ENCODE measurements at regions of chr10 and their contacts with region 1.

Region 1: DNA sequence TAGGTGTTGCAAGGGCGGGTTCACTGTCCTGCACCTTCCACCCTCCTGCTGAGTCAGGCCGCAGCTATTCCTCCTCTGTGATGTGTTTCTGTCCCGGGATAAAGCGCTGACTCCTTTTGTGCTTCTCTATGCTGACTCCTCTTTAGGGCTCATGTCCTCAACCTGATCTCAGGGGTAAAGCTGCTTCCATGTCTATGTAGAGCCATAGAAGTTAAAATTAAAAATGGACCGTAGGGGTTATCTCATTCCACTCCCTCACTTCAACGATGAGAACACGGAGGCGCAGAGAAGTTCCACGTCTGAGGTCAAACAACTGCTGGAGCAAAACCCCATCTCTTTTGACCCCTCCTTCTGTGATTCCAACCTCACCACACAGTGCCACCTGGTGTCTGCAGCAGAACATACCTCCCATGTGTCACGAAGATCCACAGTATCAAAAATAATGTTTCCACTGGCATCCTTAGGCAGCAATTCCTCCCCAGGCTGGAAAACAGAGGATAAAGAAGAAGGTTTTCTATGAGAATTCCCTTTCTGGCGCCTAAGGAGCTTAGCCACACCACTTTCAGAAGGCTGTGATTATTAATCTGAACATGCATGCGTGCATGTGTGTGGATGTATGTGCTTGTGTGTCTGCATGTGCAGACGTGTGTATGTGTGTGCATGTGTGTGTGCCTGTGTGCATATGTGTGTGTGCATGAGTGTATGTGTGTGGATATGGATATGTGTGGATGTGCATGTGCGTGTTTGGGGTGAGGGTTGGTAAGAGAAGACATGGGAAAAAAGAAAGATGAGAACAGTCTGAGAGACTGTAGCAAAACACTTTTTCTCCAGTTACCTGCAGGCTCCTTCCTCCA is 81.2 kb upstream of the UCN3 start:
- DNase-seq: peak; percentile 55 to 67
- ATAC-seq: peak; percentile 81 to 94 (median 88)
- H3K4me3 ChIP-seq: no peak overlapping the region
- H3K27ac ChIP-seq: peak overlapping the region in 1 of 10 donors; percentile 76
- H3K4me1 ChIP-seq: peaks cover 0 to 26% (median 0%) of the 10 kb centered on the region in 9 donors
- H3K27me3 ChIP-seq: peaks cover 0 to 4% (median 0%) of the 10 kb centered on the region in 7 donors
- CTCF ChIP-seq: peak; percentile 33 to 77 (median 68)

Region 2: GRCh38 chr10:4981722-4982471 is 301.6 kb before region 1 on chr10:
- intact Hi-C with region 1: loop called in 1 of 10 experiments (anchors 10 kb)
- DNase-seq: peak in 1 of 2 donors; percentile 30
- ATAC-seq: peak in 7 of 8 donors; percentile 51 to 71 (median 63)
- H3K4me3 ChIP-seq: no peak overlapping the region
- H3K27ac ChIP-seq: peak overlapping the region in 6 of 10 donors; percentile 2 to 62 (median 15)
- H3K4me1 ChIP-seq: peaks cover 4 to 27% (median 11%) of the 10 kb centered on the region in 9 donors
- H3K27me3 ChIP-seq: no peaks in the 10 kb centered on the region
- CTCF ChIP-seq: peak in 8 of 9 donors; percentile 20 to 64 (median 57)

Region 3: GRCh38 chr10:5014936-5015335 is 268.6 kb before region 1 on chr10:
- intact Hi-C with region 1: loop called in 2 of 10 experiments (anchors 10 kb)
- DNase-seq: no peak
- ATAC-seq: no peak
- H3K4me3 ChIP-seq: no peak overlapping the region
- H3K27ac ChIP-seq: no peak overlapping the region
- H3K4me1 ChIP-seq: peaks cover 0 to 30% (median 15%) of the 10 kb centered on the region in 9 donors
- H3K27me3 ChIP-seq: no peaks in the 10 kb centered on the region
- CTCF ChIP-seq: peak in 6 of 9 donors; percentile 6 to 42 (median 18)

Region 4: DNA sequence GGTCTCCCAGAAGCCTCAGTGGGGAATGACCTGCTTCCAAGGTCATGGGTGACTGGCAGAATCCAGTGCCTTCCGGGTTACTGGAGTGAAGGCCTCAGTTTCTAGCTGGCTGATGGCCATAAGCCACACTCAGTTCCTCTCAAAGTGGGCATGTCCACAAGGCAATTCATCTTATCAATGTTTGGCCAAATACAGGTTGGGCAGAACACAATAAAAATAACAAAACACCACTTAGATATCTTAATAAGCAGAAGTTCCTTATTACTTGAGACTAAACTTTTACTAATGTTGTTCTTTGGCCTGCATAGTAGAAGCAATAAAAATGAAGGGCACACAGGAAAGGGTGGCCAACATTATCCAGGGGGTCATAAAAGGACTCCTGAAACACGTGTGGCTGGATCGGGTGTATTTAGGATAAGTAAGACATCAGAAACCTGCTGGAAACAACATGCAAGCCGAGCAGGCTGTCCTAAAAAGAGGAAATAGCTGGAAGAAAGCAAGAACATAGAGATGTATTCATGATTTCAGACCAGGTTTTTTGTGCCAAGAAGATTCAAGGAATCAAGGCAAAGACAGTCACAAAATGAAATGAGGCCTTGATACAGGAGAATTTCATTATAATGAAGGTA is 260.2 kb before region 1 on chr10:
- intact Hi-C with region 1: loop called in 2 of 10 experiments (anchors 10 kb)
- DNase-seq: no peak
- ATAC-seq: no peak
- H3K4me3 ChIP-seq: no peak overlapping the region
- H3K27ac ChIP-seq: no peak overlapping the region
- H3K4me1 ChIP-seq: peaks cover 0 to 28% (median 22%) of the 10 kb centered on the region in 9 donors
- H3K27me3 ChIP-seq: no peaks in the 10 kb centered on the region
- CTCF ChIP-seq: no peak

Region 5: GRCh38 chr10:5105626-5106025 is 177.9 kb before region 1 on chr10:
- intact Hi-C with region 1: loop called in 1 of 10 experiments (anchors 10 kb)
- DNase-seq: no peak
- ATAC-seq: peak in 1 of 8 donors; percentile 75
- H3K4me3 ChIP-seq: no peak overlapping the region
- H3K27ac ChIP-seq: no peak overlapping the region
- H3K4me1 ChIP-seq: peaks cover 0 to 3% (median 0%) of the 10 kb centered on the region in 9 donors
- H3K27me3 ChIP-seq: no peaks in the 10 kb centered on the region
- CTCF ChIP-seq: no peak

Region 6: DNA sequence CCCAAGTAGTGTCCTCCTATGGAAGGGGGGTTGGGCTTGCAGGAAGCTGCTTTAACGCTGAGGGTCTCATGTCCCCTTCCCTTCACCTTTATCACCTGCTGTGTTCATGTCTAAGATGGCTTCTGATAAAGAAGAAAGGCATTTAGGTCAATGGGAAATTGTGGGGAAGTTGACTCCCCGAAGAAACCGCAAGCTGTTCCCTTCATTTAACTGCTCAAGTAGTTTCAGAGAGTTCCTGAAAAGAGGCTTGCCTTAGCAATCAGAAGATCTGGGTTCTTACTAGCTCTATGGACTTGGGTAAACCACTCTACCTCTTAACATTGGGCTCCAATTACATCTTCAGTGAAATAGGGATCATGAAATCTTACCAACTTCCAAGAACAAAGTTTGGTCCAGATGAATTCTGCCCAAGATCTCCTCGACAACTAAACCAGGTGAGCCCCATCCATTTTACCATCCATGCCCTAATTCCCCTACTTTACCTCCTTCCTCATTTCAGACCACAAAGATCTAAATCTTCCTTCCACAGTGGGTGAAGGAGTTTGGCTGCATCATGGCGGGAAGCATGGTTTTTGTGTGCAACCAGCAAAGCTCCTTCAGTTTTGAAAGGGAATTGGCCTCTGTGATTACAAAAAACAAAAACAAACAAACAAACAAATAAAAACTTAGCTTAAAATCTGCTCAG is 50.8 kb after region 1 on chr10:
- intact Hi-C with region 1: no loop called
- DNase-seq: no peak
- ATAC-seq: no peak
- H3K4me3 ChIP-seq: no peak overlapping the region
- H3K27ac ChIP-seq: no peak overlapping the region
- H3K4me1 ChIP-seq: no peaks in the 10 kb centered on the region
- H3K27me3 ChIP-seq: peaks cover 0 to 15% (median 0%) of the 10 kb centered on the region in 7 donors
- CTCF ChIP-seq: no peak

Region 7: DNA sequence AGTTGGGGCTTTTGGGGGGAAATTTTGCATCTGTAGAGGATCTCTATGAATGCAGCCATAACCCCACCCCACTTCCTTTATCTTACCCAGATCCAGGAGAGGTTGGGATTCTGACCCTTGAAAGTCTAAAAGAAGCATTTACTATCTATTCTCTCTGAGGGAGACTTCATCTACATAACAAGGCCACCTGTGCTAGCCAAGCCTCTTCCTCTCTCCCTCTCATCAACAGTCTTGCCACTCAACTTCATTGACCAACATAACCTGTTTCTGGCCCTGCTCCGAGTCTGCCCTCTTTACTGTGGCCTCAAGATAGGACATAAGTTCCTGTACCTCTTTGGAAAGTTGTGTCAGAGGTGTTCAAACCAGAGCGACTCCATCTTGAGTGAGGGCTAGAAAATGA is 101.7 kb after region 1 on chr10:
- intact Hi-C with region 1: loop called in 1 of 10 experiments (anchors 5 kb)
- DNase-seq: no peak
- ATAC-seq: no peak
- H3K4me3 ChIP-seq: no peak overlapping the region
- H3K27ac ChIP-seq: no peak overlapping the region
- H3K4me1 ChIP-seq: peaks cover 0 to 4% (median 0%) of the 10 kb centered on the region in 9 donors
- H3K27me3 ChIP-seq: no peaks in the 10 kb centered on the region
- CTCF ChIP-seq: no peak